RWPE1 (cell line): ENCODE measurements at regions of chr1 and their contacts with region 1.

Region 1: DNA sequence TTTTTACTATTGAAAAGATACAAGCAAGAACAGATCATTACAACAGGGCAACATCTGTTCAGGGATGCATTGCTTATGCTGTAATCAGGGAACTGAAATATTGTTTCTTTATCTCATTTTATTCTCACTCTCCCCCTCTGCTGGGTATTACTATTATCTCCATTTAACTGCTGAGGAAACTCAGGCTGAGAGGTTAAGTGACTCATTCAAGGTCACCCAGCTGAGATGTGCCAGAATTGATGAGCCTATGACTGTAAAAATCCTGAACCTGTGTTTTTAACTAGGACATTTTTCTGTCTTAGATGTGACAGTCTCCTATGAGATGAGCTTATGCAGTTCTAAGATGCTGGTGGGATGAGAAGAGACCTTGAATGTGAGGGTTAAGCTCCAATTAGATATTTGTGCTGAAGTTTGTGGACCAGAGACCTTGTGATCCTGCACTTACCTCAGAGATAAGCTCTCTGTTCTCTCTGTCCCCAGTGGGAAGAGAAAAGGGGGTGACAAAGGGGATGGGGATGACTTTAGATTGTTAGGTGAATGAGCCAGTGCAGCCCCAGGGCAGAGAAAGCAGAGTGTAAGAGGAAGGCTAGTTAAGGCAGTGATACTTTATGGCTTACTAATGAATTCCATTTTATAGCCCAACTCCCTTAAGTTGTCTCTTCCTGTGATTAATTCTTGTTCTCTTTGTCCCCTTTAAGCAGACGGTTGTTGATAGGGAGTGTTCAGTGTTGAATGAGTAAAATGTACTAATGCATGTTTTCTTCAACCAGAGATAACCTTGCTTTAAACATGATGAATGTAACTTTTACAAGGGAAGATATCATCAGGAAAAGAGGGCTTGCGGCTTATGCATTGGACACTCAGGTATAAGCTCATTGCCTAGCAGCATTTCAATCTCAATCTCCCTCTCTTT is 111.4 kb downstream of the HLX start:
- DNase-seq: peak; percentile 26
- H3K27ac ChIP-seq: no peak overlapping the region
- CTCF ChIP-seq: no peak

Region 2: GRCh38 chr1:220957233-220957605 is 33.5 kb before region 1 on chr1:
- CTCF ChIA-PET with region 1: interaction called, 11 read pairs
- POLR2A ChIA-PET with region 1: no interaction called
- DNase-seq: peak; percentile 20
- H3K27ac ChIP-seq: no peak overlapping the region
- CTCF ChIP-seq: no peak